HAP-1 (cell line): ENCODE measurements at regions of chr5 and their contacts with region 1.

Region 1: GRCh38 chr5:80487829-80488721 is at the start of gene FAM151B:
- DNase-seq: peak; percentile 79 to 86
- H3K4me3 ChIP-seq: peak within 1 kb of the TSS; percentile 39
- H3K4me1 ChIP-seq: peaks cover 11% of the 10 kb centered on the region
- H3K27me3 ChIP-seq: no peaks in the 10 kb centered on the region

Region 2: DNA sequence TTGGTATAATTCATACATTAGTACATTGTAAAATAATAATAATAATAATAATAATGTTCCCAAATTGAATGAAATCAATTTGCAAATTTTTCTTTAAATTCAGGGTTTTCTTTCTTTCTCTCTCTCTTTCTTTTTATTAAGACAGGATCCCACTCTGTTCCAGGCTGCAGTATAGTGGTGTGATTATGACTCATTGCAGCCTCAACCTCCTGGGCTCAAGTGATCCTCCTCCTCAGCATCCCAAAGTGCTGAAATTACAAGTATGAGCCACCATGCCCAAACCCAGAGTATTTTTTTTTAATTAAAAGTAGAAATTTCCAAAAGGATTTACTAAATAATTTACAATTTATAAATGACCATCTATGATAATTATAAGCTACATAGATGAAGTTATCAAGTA is 1091.8 kb before region 1 on chr5:
- in situ Hi-C with region 1: no loop called
- DNase-seq: no peak
- H3K4me3 ChIP-seq: no peak overlapping the region
- H3K4me1 ChIP-seq: no peaks in the 10 kb centered on the region
- H3K27me3 ChIP-seq: no peaks in the 10 kb centered on the region

Region 3: GRCh38 chr5:80308526-80308925 is 179.5 kb before region 1 on chr5:
- in situ Hi-C with region 1: no loop called
- DNase-seq: no peak
- H3K4me3 ChIP-seq: no peak overlapping the region
- H3K4me1 ChIP-seq: no peaks in the 10 kb centered on the region
- H3K27me3 ChIP-seq: no peaks in the 10 kb centered on the region

Region 4: GRCh38 chr5:80672140-80672736 is 184.2 kb after region 1 on chr5:
- in situ Hi-C with region 1: loop called (anchors 10 kb)
- DNase-seq: peak; percentile 59 to 85
- H3K4me3 ChIP-seq: no peak overlapping the region
- H3K4me1 ChIP-seq: no peaks in the 10 kb centered on the region
- H3K27me3 ChIP-seq: no peaks in the 10 kb centered on the region

Region 5: DNA sequence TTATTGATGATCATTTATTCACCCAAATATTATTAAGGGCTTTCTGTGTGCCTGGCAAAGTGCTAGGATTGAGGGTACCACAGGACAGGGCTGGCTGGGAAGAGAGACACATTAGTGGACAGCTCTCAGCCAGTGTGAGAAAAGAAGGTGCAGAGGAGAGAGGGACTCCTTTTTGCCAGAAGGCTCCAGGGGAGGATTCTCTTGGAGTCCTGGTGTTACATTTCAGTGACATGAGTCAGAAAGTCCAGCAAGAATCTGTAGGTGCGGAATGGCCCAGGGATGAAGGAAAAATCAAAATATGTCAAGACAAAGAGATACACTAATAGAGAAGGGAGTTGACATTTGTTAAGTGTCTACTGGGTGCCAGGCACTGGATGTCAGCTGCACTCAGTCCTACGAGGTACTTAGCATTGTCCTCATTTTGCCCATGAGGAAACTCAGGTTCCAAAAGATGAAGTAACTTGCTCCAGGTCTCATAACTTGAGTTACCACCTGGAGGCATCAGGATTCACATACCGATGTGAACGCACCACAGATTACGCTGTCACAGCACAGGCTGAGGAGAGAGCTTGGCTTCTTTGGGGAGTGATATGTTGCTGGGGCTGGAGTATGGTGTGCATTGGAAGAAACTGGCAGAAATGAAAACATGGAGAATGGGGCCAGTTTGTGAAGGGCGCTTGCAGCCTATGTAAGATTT is 532.6 kb after region 1 on chr5:
- in situ Hi-C with region 1: no loop called
- DNase-seq: no peak
- H3K4me3 ChIP-seq: no peak overlapping the region
- H3K4me1 ChIP-seq: peaks cover 14% of the 10 kb centered on the region
- H3K27me3 ChIP-seq: no peaks in the 10 kb centered on the region